ENCODE measurements at regions of chr17 and their contacts with region 1.

Region 1: GRCh38 chr17:75173526-75173925 is 9.2 kb downstream of the SUMO2 start:
- DNase-seq: no peak
- H3K4me3 ChIP-seq: no peak overlapping the region
- CTCF ChIP-seq: no peak

Region 2: DNA sequence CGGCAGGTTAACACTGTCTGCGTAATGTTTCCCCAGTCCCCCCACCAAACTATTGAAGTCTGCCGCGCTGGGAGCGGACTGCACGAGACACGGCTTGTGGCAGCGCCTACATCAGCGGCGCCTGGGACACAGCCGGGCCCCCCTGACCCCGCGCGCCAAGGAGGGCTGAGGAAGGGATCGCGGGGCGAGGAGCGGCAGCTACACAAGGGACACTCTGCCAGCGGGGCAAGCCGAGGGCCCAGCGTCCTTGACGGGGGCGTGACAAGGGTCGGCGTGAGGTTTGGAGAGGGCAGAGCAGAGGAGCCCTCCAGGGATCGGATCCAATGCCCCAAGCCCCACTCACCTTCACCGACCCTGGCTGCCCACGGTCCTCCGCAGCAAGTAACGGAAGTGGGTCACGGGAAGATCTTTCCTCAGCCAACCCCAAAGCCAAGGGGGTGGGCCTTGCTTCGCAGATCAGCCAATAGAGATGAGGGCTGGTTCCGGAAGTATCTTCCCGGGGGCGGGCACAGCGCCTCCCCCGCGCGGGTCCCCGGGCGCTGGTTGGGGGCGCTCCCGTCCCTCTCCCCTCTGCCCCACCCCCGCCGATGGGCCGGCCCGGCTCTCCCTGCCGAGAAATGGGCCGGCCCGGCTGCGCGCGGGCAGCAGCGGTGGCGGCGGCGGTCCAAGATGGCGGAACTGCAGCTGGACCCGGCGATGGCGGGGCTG is 126.8 kb before region 1 on chr17 and contains the starts of genes ATP5PD and KCTD2:
- CTCF ChIA-PET with region 1: interaction called, 11 read pairs
- POLR2A ChIA-PET with region 1: no interaction called
- DNase-seq: peak; percentile 77
- H3K4me3 ChIP-seq: peak within 1 kb of the TSS; percentile 99
- CTCF ChIP-seq: no peak

Region 3: DNA sequence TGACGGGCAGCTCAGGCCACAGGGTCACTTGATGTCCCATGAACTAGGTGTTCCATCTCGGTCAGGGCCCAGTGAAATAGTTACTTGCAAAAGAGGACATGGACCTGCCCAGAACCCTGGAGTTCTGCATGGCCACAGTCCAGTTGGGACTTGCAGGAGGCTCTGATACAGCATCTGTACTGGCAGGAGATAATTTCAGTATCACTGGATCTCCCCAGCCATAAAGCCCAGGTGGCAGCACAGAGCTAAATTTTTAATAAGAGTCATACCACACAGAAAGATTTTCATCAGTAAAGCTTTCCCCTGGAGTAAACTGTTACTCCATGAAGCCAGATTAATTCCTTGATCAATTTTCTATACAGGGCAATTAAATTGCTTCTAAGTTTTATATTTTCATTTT is 103.7 kb before region 1 on chr17:
- CTCF ChIA-PET with region 1: interaction called, 11 read pairs
- POLR2A ChIA-PET with region 1: no interaction called
- DNase-seq: no peak
- H3K4me3 ChIP-seq: no peak overlapping the region
- CTCF ChIP-seq: peak; percentile 36

Region 4: DNA sequence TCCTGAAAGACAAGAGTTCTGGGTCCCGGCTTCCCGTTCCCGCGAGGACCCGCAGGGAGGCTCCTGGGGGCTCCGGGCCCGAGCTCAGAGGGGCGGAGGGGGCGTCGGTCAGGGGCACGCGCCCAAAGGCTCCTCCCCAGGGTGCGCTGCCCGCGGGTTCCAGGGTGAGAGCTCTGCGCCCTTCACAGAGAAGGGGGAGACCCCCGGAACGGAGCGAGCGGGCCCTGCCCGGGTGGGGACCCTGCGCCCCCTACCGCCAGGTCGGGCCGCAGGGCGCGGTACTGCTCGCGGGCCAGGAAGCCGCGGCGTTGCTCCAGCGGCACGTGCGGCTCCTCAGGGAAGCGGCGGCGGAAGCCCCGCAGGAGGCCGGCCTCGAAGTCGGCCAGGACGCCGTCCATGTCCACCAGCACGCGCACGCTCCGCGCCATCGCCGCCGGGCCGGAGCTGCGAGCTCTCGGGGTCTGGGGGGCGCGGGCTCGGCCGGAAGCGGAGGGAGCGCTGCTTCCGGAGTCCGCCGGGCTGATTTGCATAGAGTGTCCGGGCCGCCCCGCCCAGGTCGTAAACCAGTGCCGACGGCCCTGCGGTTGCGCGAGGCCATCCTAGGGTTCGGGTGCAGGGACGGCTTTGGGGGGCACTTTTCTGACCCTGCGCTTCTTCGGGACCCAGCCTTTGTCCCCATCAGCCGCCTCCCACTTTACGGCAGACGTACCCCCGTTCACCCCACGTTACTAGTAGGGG is 42.1 kb before region 1 on chr17 and contains the start of gene NT5C:
- CTCF ChIA-PET with region 1: interaction called, 13 read pairs
- POLR2A ChIA-PET with region 1: no interaction called
- DNase-seq: no peak
- H3K4me3 ChIP-seq: peak within 1 kb of the TSS; percentile 73
- CTCF ChIP-seq: peak; percentile 81

Region 5: GRCh38 chr17:75159191-75160031 is 14.1 kb before region 1 on chr17:
- CTCF ChIA-PET with region 1: interaction called, 22 read pairs
- POLR2A ChIA-PET with region 1: interaction called, 5 read pairs
- DNase-seq: no peak
- H3K4me3 ChIP-seq: no peak overlapping the region
- CTCF ChIP-seq: no peak

Region 6: GRCh38 chr17:75191584-75191983 is 18.1 kb after region 1 on chr17:
- CTCF ChIA-PET with region 1: interaction called, 11 read pairs
- POLR2A ChIA-PET with region 1: no interaction called
- DNase-seq: no peak
- H3K4me3 ChIP-seq: no peak overlapping the region
- CTCF ChIP-seq: no peak

Region 7: DNA sequence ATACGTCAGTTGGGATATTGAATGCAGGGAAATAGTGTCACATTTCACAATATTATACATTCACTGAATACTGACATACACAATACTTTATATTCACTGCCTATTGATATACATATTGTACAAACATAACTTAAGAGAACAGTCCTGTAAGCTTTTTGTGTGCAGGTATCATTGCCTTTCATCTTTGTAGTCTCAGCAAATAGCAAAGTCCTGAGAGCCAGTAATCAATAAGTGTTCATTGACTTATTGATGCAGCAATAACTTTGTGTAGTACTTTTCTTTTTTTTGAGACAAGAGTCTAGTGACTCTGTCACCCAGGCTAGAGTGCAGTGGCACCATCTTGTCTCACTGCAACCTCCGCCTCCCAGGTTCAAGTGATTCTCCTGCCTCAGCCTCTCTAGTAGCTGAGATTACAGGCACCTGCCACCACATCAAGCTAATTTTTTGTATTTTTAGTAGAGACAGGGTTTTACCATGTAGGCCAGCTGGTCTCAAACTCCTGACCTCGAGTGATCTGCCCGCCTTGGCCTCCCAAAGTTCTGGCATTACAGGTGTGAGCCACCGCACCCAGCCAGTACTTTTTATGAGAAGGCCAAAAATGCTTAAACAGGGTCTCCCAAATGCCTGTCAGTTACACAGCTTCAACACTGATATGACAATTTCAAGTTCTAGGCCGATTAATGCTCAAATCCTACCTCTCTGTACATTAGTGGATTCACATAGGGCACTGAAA is 26.5 kb after region 1 on chr17:
- CTCF ChIA-PET with region 1: interaction called, 13 read pairs
- POLR2A ChIA-PET with region 1: no interaction called
- DNase-seq: no peak
- H3K4me3 ChIP-seq: no peak overlapping the region
- CTCF ChIP-seq: no peak